ENCODE measurements at regions of chr3 and their contacts with region 1.

Region 1: GRCh38 chr3:178325330-178325729 is 210.9 kb upstream of the KCNMB2 start:
- DNase-seq: peak; percentile 61
- ATAC-seq: peak; percentile 42; the same call in 1 of the 2 replicates
- H3K4me3 ChIP-seq: no peak overlapping the region
- H3K27ac ChIP-seq: no peak overlapping the region
- H3K4me1 ChIP-seq: no peaks in the 10 kb centered on the region
- H3K27me3 ChIP-seq: no peaks in the 10 kb centered on the region
- CTCF ChIP-seq: peak; percentile 73

Region 2: GRCh38 chr3:177478170-177478860 is 847.0 kb before region 1 on chr3:
- CTCF ChIA-PET with region 1: no interaction called
- POLR2A ChIA-PET with region 1: no interaction called
- intact Hi-C with region 1: loop called (anchors 10 kb)
- DNase-seq: peak; percentile 98
- ATAC-seq: peak; percentile 92
- H3K4me3 ChIP-seq: peak overlapping the region; percentile 24; the same call in 1 of the 2 replicates
- H3K27ac ChIP-seq: peak overlapping the region; percentile 84
- H3K4me1 ChIP-seq: peaks cover 26% of the 10 kb centered on the region
- H3K27me3 ChIP-seq: no peaks in the 10 kb centered on the region
- CTCF ChIP-seq: no peak

Region 3: GRCh38 chr3:177624514-177625495 is 700.5 kb before region 1 on chr3:
- CTCF ChIA-PET with region 1: no interaction called
- POLR2A ChIA-PET with region 1: no interaction called
- intact Hi-C with region 1: loop called (anchors 10 kb)
- DNase-seq: peak; percentile 72
- ATAC-seq: peak; percentile 74
- H3K4me3 ChIP-seq: no peak overlapping the region
- H3K27ac ChIP-seq: peak overlapping the region; percentile 28
- H3K4me1 ChIP-seq: peaks cover 29% of the 10 kb centered on the region
- H3K27me3 ChIP-seq: no peaks in the 10 kb centered on the region
- CTCF ChIP-seq: 0 out of 2 replicates have a peak, but pooled peaks have one; percentile 20

Region 4: GRCh38 chr3:177713928-177714900 is 611.1 kb before region 1 on chr3:
- CTCF ChIA-PET with region 1: no interaction called
- POLR2A ChIA-PET with region 1: no interaction called
- intact Hi-C with region 1: no loop called
- DNase-seq: no peak
- ATAC-seq: no peak
- H3K4me3 ChIP-seq: no peak overlapping the region
- H3K27ac ChIP-seq: no peak overlapping the region
- H3K4me1 ChIP-seq: no peaks in the 10 kb centered on the region
- H3K27me3 ChIP-seq: no peaks in the 10 kb centered on the region
- CTCF ChIP-seq: no peak

Region 5: GRCh38 chr3:177823701-177824189 is 501.6 kb before region 1 on chr3:
- CTCF ChIA-PET with region 1: no interaction called
- POLR2A ChIA-PET with region 1: no interaction called
- intact Hi-C with region 1: loop called (anchors 2 kb)
- DNase-seq: no peak
- ATAC-seq: peak; percentile 8
- H3K4me3 ChIP-seq: no peak overlapping the region
- H3K27ac ChIP-seq: peak overlapping the region; percentile 31; the same call in 1 of the 2 replicates
- H3K4me1 ChIP-seq: peaks cover 39% of the 10 kb centered on the region
- H3K27me3 ChIP-seq: no peaks in the 10 kb centered on the region
- CTCF ChIP-seq: no peak

Region 6: DNA sequence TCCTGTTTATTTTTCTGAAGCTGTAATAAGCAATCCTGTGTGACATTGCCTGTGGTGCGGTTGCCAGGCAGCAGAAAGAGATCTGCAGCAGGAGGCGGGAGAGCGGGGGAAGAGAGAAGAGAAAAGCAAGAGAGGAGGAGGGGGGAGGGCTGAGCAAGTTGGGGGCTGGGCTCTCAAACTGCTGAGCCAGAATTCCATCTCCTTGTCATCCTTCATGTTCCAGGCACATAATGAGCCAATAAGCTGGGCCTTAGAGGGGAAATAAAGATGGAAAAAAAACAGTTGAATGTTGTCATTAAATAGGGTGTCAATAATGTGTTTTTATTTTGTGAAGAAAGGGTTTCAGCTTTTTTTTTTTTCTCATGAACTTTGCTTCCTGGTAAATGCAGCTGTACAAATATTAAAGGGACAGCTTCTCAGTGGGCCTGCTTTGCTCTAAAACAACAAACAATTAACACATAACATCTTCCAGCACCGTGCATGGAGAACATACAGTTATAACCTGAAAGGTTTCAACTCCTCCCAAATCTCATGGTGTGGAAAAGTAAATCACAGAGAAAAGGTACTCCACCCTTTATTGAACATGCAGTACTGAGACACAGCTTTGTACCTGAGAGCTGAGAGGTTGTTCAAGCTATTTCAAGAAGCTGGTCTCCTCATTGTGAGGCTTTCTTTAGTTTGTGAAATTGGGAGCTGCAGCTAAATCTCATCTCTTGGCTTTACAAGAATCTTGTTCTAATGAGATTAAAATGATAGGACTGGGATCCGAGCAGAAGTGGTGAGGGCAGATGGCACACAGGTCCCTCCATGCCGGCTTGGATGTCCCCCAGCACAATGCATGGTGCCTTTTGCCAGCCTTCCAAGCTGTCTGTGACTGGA is 240.2 kb before region 1 on chr3:
- CTCF ChIA-PET with region 1: no interaction called
- POLR2A ChIA-PET with region 1: no interaction called
- intact Hi-C with region 1: loop called (anchors 1 kb)
- DNase-seq: no peak
- ATAC-seq: no peak
- H3K4me3 ChIP-seq: no peak overlapping the region
- H3K27ac ChIP-seq: no peak overlapping the region
- H3K4me1 ChIP-seq: no peaks in the 10 kb centered on the region; the same call in 1 of the 2 replicates
- H3K27me3 ChIP-seq: no peaks in the 10 kb centered on the region
- CTCF ChIP-seq: no peak

Measured in PC-3 (cell line).